ENCODE measurements at regions of chr19 and their contacts with region 1.

Region 1: DNA sequence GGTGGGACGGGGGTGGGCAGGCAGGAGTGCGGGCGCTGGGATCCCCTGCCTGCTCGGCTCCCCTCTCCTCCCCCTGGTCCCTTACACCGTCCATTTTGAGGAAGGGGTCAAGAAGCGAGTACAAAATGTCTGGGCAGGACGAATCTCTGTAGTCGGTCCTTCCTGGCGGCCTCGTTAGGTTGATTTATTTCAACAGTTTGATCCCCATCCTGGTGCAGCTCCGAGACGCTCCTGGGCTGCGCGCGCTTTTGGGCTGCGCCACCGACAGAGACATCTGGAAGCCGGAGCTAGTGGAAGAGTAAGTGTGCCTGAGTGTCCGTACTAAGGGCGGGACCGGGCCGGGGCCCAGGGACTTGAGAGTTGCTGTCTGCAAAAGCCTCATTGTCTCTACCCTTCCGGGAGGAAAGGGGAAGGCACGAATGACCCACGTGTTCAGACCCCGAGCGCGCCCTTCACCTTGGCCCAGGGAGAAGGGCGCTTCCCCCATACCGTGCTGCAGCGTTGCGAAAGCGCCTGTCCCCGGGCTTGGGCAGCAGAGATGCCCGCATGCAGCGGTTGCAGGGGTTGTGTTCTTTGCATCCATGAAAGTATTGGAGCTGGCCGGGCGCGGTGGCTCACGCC is 1.8 kb downstream of the ZNF114 start:
- DNase-seq: peak; percentile 24
- H3K4me3 Mint-ChIP-seq: peak overlapping the region; percentile 79
- H3K27ac Mint-ChIP-seq: peak overlapping the region; percentile 82
- H3K4me1 Mint-ChIP-seq: peaks cover 27% of the 10 kb centered on the region
- H3K27me3 Mint-ChIP-seq: peaks cover 23% of the 10 kb centered on the region
- CTCF ChIP-seq: no peak

Region 2: DNA sequence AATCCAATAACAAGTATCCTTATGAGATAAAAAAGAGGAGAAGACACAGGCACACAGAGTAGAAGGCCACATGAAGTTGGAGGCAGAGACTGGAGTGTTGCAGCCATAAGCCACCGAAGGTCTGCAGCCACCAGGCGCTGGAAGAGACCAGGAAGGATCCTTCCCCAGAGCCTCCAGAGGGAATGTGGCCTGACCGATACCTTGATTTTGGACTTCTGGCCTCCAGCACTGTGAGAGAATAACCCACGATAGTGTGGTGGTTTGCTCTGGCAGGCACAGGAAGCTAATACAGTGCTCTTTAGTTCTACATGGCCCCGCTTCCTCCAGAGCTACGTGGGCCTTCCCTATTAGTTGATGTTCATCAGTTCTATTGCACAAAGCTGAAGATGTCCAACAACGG is 370.3 kb before region 1 on chr19:
- CTCF ChIA-PET with region 1: no interaction called
- intact Hi-C with region 1: no loop called
- DNase-seq: no peak
- H3K4me3 Mint-ChIP-seq: no peak overlapping the region
- H3K27ac Mint-ChIP-seq: no peak overlapping the region
- H3K4me1 Mint-ChIP-seq: no peaks in the 10 kb centered on the region
- H3K27me3 Mint-ChIP-seq: peaks cover 52% of the 10 kb centered on the region
- CTCF ChIP-seq: no peak

Region 3: GRCh38 chr19:48290771-48291488 is 19.3 kb after region 1 on chr19:
- CTCF ChIA-PET with region 1: interaction called, 4 read pairs
- intact Hi-C with region 1: loop called (anchors 1 kb)
- DNase-seq: peak; percentile 87
- H3K4me3 Mint-ChIP-seq: peak overlapping the region; percentile 70
- H3K27ac Mint-ChIP-seq: no peak overlapping the region
- H3K4me1 Mint-ChIP-seq: no peaks in the 10 kb centered on the region
- H3K27me3 Mint-ChIP-seq: peaks cover 18% of the 10 kb centered on the region
- CTCF ChIP-seq: peak; percentile 92

Region 4: DNA sequence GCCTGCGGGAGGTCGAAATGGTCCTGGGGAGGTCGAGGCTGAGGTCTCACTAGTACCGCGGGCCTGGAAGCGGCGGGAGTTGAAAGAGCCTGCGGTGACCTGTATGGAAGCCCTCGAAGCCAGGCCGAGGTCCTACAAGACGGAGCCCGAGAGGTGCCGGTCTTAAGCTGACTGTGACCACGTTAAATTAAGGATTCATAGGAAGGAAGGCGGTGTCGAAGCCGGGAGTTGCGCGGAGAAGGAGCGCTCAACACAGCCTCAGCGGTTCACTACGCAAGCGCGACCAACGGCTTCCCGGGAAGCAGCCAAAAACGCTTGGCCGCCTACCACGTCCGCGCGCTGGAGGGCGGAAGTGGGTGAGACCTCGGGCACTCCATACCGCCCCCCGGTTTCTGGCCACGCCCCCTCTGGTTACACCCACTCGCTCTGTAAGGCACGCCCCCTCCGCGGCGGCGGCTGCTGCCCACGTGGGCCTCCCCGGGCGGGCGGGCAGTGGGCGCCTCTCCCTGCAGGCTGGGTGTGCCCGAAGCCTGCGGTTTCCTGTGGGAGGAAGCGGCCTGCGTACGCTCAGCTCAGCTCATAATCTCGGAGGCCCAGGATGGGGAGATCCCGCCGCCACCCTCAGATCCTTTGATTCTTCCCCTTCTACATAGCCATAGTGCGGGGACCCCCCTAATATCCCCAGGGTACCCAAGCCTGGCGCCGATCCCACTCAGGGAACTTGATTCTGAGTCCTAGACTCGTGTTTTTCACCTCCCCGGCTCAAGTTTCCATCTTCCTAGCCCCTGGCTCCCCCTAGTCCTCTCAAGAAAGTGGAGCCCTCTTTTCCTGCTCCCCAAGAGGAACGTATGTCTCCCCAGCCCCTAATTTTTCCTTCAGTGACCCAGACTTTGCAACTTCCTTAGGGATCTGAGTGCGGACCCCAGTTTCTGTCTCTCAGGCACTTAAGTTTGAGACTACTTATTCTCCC is 50.3 kb after region 1 on chr19:
- CTCF ChIA-PET with region 1: interaction called, 14 read pairs
- intact Hi-C with region 1: no loop called
- DNase-seq: peak; percentile 100
- H3K4me3 Mint-ChIP-seq: peak overlapping the region; percentile 79
- H3K27ac Mint-ChIP-seq: peak overlapping the region; percentile 83
- H3K4me1 Mint-ChIP-seq: peaks cover 59% of the 10 kb centered on the region
- H3K27me3 Mint-ChIP-seq: peaks cover 16% of the 10 kb centered on the region
- CTCF ChIP-seq: no peak

Region 5: GRCh38 chr19:48401287-48401686 is 129.6 kb after region 1 on chr19:
- CTCF ChIA-PET with region 1: no interaction called
- intact Hi-C with region 1: no loop called
- DNase-seq: no peak
- H3K4me3 Mint-ChIP-seq: no peak overlapping the region
- H3K27ac Mint-ChIP-seq: no peak overlapping the region
- H3K4me1 Mint-ChIP-seq: peaks cover 26% of the 10 kb centered on the region
- H3K27me3 Mint-ChIP-seq: peaks cover 54% of the 10 kb centered on the region
- CTCF ChIP-seq: no peak